A549 (cell line): ENCODE measurements at regions of chr12 and their contacts with region 1.

Region 1: DNA sequence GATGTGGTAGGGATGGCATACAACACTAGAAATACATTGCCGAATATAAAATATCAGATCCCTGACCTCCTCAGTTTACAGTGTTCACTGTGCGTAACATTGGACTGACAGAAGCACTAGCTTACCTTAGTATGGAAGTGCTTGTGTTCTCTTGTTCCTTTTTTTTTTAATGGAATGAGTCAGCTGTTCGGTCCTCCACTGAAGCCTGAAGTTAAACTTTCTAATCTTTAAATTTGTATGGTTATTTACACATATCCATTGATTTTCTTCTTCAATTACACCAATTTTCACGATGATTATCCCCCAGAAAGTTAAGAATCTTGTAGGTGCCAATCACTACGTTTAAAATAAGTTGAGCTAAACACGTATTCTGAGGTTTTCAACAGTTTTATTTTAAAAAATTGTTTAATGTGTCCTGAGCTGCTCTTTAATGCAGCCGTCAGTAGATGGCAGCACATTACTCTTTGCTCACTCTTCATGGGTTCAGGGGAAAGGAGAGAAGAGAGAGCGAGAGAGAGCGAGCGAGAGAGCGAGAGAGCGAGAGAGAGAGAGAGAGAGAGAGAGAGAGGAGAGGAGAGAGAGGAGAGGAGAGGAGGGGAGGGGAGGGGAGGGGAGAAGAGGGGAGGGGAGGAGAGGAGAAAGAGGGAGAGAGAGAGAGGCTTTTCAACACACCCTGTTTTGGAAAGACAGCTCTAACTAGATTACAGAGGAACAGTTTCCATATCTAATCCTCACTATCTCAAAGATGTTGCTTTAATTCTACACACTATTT is 134.7 kb upstream of the SCAF11 start:
- DNase-seq: peak; percentile 59 to 87
- ATAC-seq: peak; percentile 92 to 96
- H3K4me3 ChIP-seq: peak overlapping the region; percentile 7; the same call in 1 of the 3 replicates
- H3K27ac ChIP-seq: peak overlapping the region in 1 of 2 experiments; percentile 17; a peak in 3 of 6 replicates
- H3K4me1 ChIP-seq: peaks cover 14% of the 10 kb centered on the region
- CTCF ChIP-seq: peak; percentile 61
- EP300 ChIP-seq: no peak
- POLR2A ChIP-seq: no peak
- RAD21 ChIP-seq: peak; percentile 76 to 87

Region 2: GRCh38 chr12:46089407-46090157 is 35.5 kb before region 1 on chr12:
- CTCF ChIA-PET with region 1: interaction called, 10 read pairs
- POLR2A ChIA-PET with region 1: no interaction called
- DNase-seq: no peak
- ATAC-seq: no peak; a peak in 1 of 6 replicates
- H3K4me3 ChIP-seq: no peak overlapping the region
- H3K27ac ChIP-seq: no peak overlapping the region
- H3K4me1 ChIP-seq: 0 out of 3 replicates have a peak, but pooled peaks cover 9% of the 10 kb centered on the region
- CTCF ChIP-seq: no peak
- EP300 ChIP-seq: no peak
- POLR2A ChIP-seq: no peak
- RAD21 ChIP-seq: no peak

Region 3: DNA sequence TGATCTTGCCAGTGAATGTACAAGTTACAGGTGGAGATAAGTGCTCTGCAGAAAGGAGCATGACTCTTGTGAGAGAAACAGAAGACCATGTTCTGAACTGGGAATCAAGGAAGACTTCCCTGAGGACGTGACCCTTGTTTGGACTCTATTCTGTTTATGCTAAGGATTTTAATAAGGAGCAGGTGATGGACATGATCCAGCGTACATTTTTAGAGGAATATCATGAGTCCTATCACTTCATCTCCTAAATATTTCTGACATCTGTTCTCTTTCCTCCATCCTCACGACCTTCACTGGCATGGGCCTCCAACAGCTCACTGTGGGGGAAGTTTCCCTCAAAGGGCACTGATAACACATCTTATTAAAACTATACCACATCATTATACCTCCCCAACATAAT is 151.7 kb after region 1 on chr12:
- CTCF ChIA-PET with region 1: no interaction called
- POLR2A ChIA-PET with region 1: no interaction called
- DNase-seq: no peak
- ATAC-seq: no peak
- H3K4me3 ChIP-seq: no peak overlapping the region
- H3K27ac ChIP-seq: no peak overlapping the region
- H3K4me1 ChIP-seq: no peaks in the 10 kb centered on the region
- CTCF ChIP-seq: no peak
- EP300 ChIP-seq: no peak
- POLR2A ChIP-seq: no peak
- RAD21 ChIP-seq: no peak

Region 4: DNA sequence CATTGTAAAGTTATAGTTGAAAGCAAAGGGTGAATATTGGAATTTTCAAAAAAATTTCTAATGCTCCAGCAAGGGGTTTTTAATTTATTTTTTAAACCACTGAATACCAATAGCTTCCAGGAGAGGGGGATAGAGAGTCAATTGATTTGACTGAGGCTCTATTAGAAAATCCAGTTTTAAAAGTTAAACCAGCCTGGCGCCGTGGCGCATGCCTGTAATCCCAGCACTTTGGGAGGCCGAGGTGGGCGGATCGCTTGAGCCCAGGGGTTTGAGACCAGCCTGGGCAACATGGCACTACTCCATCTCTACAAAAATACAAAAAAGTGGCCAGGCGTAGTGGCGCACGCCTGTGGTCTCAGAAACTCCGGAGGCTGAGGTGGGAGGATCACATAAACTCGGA is 550.7 kb after region 1 on chr12:
- CTCF ChIA-PET with region 1: interaction called, 12 read pairs
- POLR2A ChIA-PET with region 1: no interaction called
- DNase-seq: peak in 1 of 2 experiments; percentile 33
- ATAC-seq: no peak; a peak in 1 of 6 replicates
- H3K4me3 ChIP-seq: no peak overlapping the region
- H3K27ac ChIP-seq: peak overlapping the region; percentile 50 to 69; a peak in 4 of 6 replicates
- H3K4me1 ChIP-seq: peaks cover 38% of the 10 kb centered on the region
- CTCF ChIP-seq: peak; percentile 54
- EP300 ChIP-seq: no peak
- POLR2A ChIP-seq: no peak
- RAD21 ChIP-seq: peak; percentile 47 to 49; a peak in 4 of 5 replicates

Region 5: GRCh38 chr12:46944088-46944487 is 819.1 kb after region 1 on chr12:
- CTCF ChIA-PET with region 1: interaction called, 20 read pairs
- POLR2A ChIA-PET with region 1: no interaction called
- DNase-seq: peak in 1 of 2 experiments; percentile 71
- ATAC-seq: peak; percentile 74 to 75
- H3K4me3 ChIP-seq: no peak overlapping the region
- H3K27ac ChIP-seq: no peak overlapping the region
- H3K4me1 ChIP-seq: 0 out of 3 replicates have a peak, but pooled peaks cover 6% of the 10 kb centered on the region
- CTCF ChIP-seq: no peak
- EP300 ChIP-seq: no peak
- POLR2A ChIP-seq: no peak
- RAD21 ChIP-seq: peak in 1 of 2 experiments; percentile 30; a peak in 2 of 5 replicates